Natural killer cell (primary cell): ENCODE measurements at regions of chr19 and their contacts with region 1.

Region 1: GRCh38 chr19:15379083-15379995 is at the start of gene AKAP8:
- DNase-seq: peak; percentile 98 to 99
- ATAC-seq: peak; percentile 89 to 97 (median 91)
- H3K4me3 ChIP-seq: peak within 1 kb of the TSS; percentile 84
- H3K4me3 Mint-ChIP-seq: peak within 1 kb of the TSS; percentile 98
- H3K27ac ChIP-seq: peak within 1 kb of the TSS; percentile 98
- H3K27ac Mint-ChIP-seq: peak within 1 kb of the TSS; percentile 92 to 93
- H3K4me1 ChIP-seq: peaks cover 34% of the 10 kb centered on the region
- H3K4me1 Mint-ChIP-seq: peaks cover 25 to 37% of the 10 kb centered on the region in 2 donors
- H3K27me3 ChIP-seq: no peaks in the 10 kb centered on the region
- H3K27me3 Mint-ChIP-seq: no peaks in the 10 kb centered on the region
- CTCF ChIP-seq: no peak
- total RNA-seq, gene AKAP8: 65.3 to 87.6 (median 76.9) TPM

Region 2: GRCh38 chr19:15050639-15051038 is 328.7 kb before region 1 on chr19:
- intact Hi-C with region 1: no loop called
- DNase-seq: no peak
- ATAC-seq: no peak
- H3K4me3 ChIP-seq: no peak overlapping the region
- H3K4me3 Mint-ChIP-seq: no peak overlapping the region
- H3K27ac ChIP-seq: no peak overlapping the region
- H3K27ac Mint-ChIP-seq: no peak overlapping the region
- H3K4me1 ChIP-seq: no peaks in the 10 kb centered on the region
- H3K4me1 Mint-ChIP-seq: no peaks in the 10 kb centered on the region
- H3K27me3 ChIP-seq: no peaks in the 10 kb centered on the region
- H3K27me3 Mint-ChIP-seq: peaks cover 7 to 17% of the 10 kb centered on the region in 2 donors
- CTCF ChIP-seq: no peak

Region 3: DNA sequence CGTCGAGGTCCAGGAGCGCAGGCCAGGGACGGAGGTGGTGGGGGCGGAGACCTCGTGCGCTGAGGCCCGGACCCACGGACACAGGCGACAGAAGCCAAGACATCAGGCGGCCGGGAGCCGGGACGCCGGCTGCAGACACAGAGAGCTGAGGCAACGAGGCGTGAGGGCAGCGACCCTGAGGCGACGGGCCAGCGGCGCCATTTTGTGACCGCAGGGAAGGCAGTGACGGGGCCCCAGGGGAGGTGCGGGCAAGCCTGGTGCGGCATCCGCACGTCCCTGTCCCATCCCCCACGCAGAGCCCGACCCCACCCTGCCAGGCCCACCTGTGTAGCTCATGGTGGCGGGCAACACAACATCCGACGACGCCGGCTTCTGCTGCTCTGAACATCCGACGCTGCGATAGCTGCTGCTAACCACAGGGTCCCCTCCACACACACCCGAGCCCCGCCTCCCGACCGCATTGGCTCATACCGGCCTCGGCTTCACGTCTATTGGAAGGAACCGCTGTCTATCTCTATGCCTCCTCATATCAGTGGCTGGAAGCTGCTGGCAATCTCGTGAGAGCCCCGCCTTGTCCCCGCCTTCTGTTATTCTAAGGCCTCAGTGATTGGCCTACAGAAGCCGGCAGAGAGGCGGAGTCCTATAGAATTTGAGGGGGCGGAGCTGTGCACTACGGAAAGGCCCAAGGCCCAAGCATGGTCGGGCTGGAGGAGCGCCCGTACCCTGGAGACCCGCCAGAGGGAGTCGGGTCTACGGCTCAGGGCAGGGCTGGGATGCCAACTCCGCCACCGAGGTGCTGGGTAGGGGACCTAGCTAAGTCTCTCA is 39.5 kb after region 1 on chr19 and contains the start of gene AKAP8L:
- intact Hi-C with region 1: loop called (anchors 1 kb)
- DNase-seq: peak; percentile 99
- ATAC-seq: peak; percentile 91 to 98 (median 93)
- H3K4me3 ChIP-seq: peak within 1 kb of the TSS; percentile 86
- H3K4me3 Mint-ChIP-seq: peak within 1 kb of the TSS; percentile 95
- H3K27ac ChIP-seq: peak within 1 kb of the TSS; percentile 50
- H3K27ac Mint-ChIP-seq: peak within 1 kb of the TSS; percentile 91 to 98
- H3K4me1 ChIP-seq: peaks cover 25% of the 10 kb centered on the region
- H3K4me1 Mint-ChIP-seq: peaks cover 42 to 45% of the 10 kb centered on the region in 2 donors
- H3K27me3 ChIP-seq: no peaks in the 10 kb centered on the region
- H3K27me3 Mint-ChIP-seq: no peaks in the 10 kb centered on the region
- CTCF ChIP-seq: peak; percentile 81
- total RNA-seq, gene AKAP8L: 144 to 174 (median 173) TPM

Region 4: GRCh38 chr19:15529774-15530372 is 150.5 kb after region 1 on chr19:
- intact Hi-C with region 1: no loop called
- DNase-seq: no peak
- ATAC-seq: no peak
- H3K4me3 ChIP-seq: no peak overlapping the region
- H3K4me3 Mint-ChIP-seq: no peak overlapping the region
- H3K27ac ChIP-seq: no peak overlapping the region
- H3K27ac Mint-ChIP-seq: no peak overlapping the region
- H3K4me1 ChIP-seq: peaks cover 3% of the 10 kb centered on the region
- H3K4me1 Mint-ChIP-seq: peaks cover 10 to 21% of the 10 kb centered on the region in 2 donors
- H3K27me3 ChIP-seq: no peaks in the 10 kb centered on the region
- H3K27me3 Mint-ChIP-seq: no peaks in the 10 kb centered on the region
- CTCF ChIP-seq: no peak